Heart right ventricle (tissue), 16 donors: ENCODE measurements at regions of chr19 and their contacts with region 1.

Region 1: DNA sequence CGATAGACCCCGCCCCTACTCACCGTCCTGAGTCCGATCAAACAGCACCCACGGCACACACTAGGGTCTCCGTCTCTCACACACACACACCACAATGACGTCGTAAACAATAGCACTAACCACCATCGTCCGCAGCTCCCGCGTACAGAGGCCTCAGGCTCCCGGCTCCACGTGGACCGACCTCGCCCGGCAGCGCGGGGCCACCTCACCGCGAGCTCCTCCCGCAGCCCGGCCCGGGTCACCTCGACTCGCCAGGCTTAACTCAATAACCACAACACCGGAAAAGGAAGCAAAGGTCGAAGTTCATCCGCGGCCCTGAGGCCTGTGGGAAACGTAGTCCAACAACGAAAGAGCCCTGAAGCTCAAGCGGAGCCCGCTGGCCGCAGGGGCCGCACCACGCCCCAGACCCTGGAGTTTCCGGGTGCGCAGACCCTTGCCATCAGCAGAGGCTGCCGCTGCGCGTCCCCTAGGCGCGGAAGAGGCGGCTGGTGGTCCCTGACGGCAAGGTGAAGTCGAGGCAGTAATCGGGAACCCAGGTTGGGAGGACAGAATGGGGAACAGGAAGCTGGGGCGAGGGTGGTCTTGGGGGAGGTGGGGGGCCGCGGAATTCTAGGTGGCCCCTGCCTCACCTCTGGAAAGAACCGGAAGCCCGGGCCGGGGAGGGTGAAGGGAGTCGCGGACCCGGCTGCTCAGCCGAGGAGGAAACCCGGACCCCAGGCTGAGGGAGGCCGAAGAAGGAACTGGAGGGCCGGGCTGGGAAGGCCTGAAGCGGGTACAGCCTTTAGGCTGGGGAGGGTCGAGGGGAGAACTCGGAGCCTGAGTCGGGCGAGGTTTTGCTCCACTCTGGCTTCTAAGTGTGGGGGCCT is at the start of gene ZNF529:
- DNase-seq: peak; percentile 82 to 91
- ATAC-seq: peak; percentile 98 to 99 (median 99)
- H3K4me3 ChIP-seq: peak within 1 kb of the TSS; percentile 69 to 89 (median 83)
- H3K27ac ChIP-seq: peak within 1 kb of the TSS; percentile 17 to 91 (median 87)
- H3K4me1 ChIP-seq: peaks cover 3 to 26% (median 19%) of the 10 kb centered on the region in 9 donors
- H3K27me3 ChIP-seq: no peaks in the 10 kb centered on the region
- CTCF ChIP-seq: peak in 2 of 9 donors; percentile 8 to 13
- total RNA-seq, gene ZNF529: 10.7 to 18.4 (median 15.4) TPM

Region 2: DNA sequence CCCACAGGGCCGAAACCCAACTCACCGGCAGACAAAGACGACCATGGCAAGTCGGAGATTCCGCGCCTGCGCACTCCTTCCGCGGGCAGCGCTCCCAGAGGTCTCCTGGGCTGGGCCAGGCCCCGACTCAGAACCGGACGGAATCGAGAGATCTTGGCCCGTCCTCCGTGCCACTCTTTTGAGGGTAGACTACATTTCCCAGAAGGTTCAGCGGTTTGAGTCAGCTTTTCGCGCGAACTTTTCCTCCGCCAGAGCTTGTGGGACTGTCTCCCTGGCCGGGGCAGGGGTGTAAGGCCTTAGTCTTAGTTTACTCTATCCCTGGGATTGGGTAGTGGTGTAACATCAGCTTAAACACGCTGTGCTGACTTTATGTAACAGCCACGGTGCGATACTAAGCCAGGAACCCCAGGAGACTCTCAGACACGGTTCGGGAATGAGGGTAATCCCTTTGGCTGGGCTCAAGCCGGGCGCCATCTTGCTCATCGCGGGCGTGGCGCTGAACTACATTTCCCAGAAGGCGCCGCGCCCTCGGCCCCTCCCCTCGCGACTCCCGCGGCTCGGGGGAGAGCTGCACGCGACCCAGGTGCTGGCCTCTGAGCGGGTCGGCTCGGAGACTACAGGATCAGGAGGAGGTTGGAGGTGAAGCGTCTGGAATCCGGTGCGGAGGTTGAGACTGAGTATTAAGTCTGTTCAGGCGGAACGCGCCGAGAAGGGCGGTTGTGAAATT is 44.9 kb before region 1 on chr19 and contains the start of gene ZNF260:
- intact Hi-C with region 1: loop called in 2 of 10 experiments (anchors 5 kb)
- DNase-seq: peak; percentile 98 to 99
- ATAC-seq: peak; percentile 98 to 99 (median 99)
- H3K4me3 ChIP-seq: peak within 1 kb of the TSS; percentile 44 to 70 (median 64)
- H3K27ac ChIP-seq: peak within 1 kb of the TSS; percentile 68 to 95 (median 91)
- H3K4me1 ChIP-seq: peaks cover 0 to 28% (median 19%) of the 10 kb centered on the region in 9 donors
- H3K27me3 ChIP-seq: no peaks in the 10 kb centered on the region
- CTCF ChIP-seq: peak in 1 of 9 donors; percentile 10
- total RNA-seq, gene ZNF260: 7.2 to 12.8 (median 8.7) TPM

Region 3: DNA sequence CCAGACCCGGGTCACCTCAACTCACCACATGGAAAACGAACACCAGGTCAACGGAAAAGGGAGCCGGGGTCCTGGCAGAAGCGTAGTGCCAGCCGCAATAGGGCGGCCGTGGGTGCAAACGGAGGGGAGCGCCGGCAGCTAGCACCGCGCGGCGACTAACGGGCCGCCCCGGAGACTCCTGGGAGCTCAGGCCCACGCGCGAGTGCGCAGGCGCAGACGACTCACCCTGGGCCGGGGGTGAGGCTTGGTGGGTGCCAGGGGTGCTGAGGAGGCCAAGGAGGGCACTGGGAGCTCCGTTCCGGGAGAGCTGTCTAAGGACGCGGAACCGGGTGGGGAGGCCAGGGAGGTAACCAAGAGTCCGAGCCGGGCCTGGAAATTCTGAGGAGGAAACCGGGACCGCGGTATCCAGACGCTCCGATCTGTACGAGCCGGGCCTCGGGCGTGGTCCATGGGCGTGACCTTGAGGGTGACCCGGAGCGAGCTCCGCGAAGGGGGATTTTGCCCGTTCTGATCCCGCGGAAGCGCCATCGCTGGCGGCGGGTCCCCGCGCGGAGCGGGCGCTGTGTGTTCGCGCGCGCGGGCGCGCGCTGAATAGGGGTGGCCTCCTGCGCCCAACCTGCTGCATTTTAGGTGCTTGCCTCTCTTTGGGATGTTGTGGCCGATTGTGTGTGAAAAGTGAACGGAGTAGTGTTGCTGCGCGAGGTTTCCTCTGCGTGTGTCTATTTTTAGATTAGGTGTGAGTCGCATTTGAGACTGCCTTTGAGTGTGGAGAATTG is 32.0 kb after region 1 on chr19 and contains the start of gene ZNF382:
- intact Hi-C with region 1: loop called in 1 of 10 experiments (anchors 1 kb)
- DNase-seq: peak; percentile 81 to 87
- ATAC-seq: peak; percentile 96 to 98 (median 98)
- H3K4me3 ChIP-seq: peak within 1 kb of the TSS; percentile 66 to 89 (median 84)
- H3K27ac ChIP-seq: peak within 1 kb of the TSS; percentile 75 to 93 (median 89)
- H3K4me1 ChIP-seq: peaks cover 3 to 21% (median 11%) of the 10 kb centered on the region in 9 donors
- H3K27me3 ChIP-seq: no peaks in the 10 kb centered on the region
- CTCF ChIP-seq: no peak
- total RNA-seq, gene ZNF382: 13.2 to 22.2 (median 17.8) TPM

Region 4: DNA sequence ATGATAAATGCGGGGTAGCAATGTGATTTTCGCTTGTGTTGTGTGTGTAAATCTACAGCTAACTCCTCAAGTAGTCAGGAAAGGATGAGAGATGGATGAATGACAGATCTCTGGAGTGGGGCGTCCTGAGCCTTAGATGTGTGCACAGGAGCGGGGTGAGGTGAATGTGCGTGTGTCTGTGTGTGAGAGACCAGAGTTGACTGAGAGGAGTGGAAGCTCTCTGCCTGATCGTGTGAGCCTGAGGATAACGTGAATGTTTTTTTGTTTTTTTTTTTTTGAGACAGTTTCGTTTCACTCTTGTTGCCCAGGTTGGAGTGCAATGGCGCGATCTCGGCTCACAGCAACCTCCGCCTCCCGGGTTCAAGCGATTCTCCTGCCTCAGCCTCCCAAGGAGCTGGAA is 92.6 kb after region 1 on chr19:
- intact Hi-C with region 1: no loop called
- DNase-seq: no peak
- ATAC-seq: no peak
- H3K4me3 ChIP-seq: peak overlapping the region in 9 of 10 donors; percentile 65 to 89 (median 82)
- H3K27ac ChIP-seq: peak overlapping the region in 1 of 10 donors; percentile 88
- H3K4me1 ChIP-seq: peaks cover 0 to 23% (median 16%) of the 10 kb centered on the region in 9 donors
- H3K27me3 ChIP-seq: no peaks in the 10 kb centered on the region
- CTCF ChIP-seq: no peak

Region 5: GRCh38 chr19:36687214-36688056 is 114.2 kb after region 1 on chr19 and contains the start of gene ZNF567:
- intact Hi-C with region 1: loop called in 1 of 10 experiments (anchors 10 kb)
- DNase-seq: peak; percentile 98
- ATAC-seq: peak; percentile 99 to 100 (median 99)
- H3K4me3 ChIP-seq: peak within 1 kb of the TSS; percentile 60 to 89 (median 80)
- H3K27ac ChIP-seq: peak within 1 kb of the TSS in 9 of 10 donors; percentile 38 to 86 (median 75)
- H3K4me1 ChIP-seq: peaks cover 4 to 26% (median 19%) of the 10 kb centered on the region in 9 donors
- H3K27me3 ChIP-seq: no peaks in the 10 kb centered on the region
- CTCF ChIP-seq: no peak
- total RNA-seq, gene ZNF567: 1.9 to 4.7 (median 3.7) TPM

Region 6: DNA sequence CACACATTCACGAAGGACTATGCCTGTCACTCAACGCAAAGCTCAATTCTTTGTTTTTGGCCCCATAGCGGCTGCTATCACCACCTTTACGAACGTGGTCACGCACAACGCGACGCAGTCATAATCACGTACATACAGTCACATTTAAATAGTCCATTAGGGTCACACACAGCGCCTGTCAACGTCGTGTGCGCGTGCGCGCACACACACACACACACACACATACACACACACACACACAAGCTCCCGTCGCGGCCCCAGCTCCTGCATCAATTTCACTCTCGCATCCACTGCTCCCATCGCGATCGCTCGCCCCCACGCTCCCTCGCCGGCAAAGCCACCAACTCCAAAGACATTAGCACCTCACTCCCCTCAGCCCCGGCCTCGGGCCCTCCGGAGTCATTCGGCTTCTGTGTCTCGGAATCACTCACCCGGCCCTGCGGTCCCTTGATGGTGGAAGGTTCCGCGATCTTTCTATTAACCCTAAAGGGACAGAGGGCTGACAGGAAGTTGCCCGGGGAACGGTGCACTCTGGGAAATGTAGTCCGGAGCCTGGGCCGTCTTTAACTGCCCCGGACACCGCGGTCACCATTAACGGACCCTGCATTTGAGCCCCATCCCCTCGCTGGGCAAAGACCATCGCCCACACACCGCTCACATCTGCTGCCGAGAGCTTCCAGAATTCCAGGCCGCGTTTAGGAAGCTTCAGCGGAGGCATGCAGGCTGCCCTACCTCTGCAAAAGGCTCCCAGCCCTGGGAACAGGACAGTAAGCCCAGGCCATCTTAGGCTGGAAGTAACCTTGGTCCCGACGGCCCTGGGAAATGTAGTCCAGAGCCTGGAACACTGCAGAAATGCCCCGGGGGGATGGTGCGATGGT is 264.9 kb after region 1 on chr19 and contains the start of gene ZNF790:
- intact Hi-C with region 1: loop called in 1 of 10 experiments (anchors 10 kb)
- DNase-seq: peak; percentile 85 to 93
- ATAC-seq: peak; percentile 98 to 99 (median 99)
- H3K4me3 ChIP-seq: peak within 1 kb of the TSS; percentile 56 to 80 (median 76)
- H3K27ac ChIP-seq: peak within 1 kb of the TSS; percentile 78 to 94 (median 92)
- H3K4me1 ChIP-seq: peaks cover 0 to 24% (median 14%) of the 10 kb centered on the region in 9 donors
- H3K27me3 ChIP-seq: no peaks in the 10 kb centered on the region
- CTCF ChIP-seq: no peak
- total RNA-seq, gene ZNF790: 4.5 to 11.8 (median 8.7) TPM